H1 (cell line): ENCODE measurements at regions of chr13 and their contacts with region 1.

Region 1: DNA sequence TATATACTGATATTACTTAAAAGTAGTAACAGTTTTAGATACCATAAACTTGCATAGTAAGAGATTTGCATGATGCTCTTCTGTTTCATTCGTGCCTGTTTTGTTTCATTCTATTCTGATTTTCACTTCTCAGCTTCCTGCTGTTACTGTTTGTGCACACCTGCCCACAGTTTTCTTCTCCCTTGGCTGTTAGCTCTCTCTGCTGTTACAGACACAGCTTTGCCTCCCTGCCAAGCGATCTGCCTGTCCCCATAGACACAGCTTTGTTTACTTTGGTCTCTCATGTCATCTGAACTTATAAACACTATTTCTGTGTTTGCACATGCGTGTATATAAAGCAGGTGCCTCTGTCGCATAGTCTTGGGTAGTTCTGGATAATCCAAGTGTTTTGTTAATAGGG is 21.4 kb upstream of the UPF3A start:
- DNase-seq: no peak
- H3K4me3 ChIP-seq: no peak overlapping the region
- H3K27ac ChIP-seq: no peak overlapping the region
- H3K4me1 ChIP-seq: peaks cover 0 to 8% (median 2%) of the 10 kb centered on the region in 4 experiments; a peak in 2 of 7 replicates
- H3K27me3 ChIP-seq: no peaks in the 10 kb centered on the region
- CTCF ChIP-seq: no peak
- EP300 ChIP-seq: no peak
- POLR2A ChIP-seq: no peak
- RAD21 ChIP-seq: no peak

Region 2: DNA sequence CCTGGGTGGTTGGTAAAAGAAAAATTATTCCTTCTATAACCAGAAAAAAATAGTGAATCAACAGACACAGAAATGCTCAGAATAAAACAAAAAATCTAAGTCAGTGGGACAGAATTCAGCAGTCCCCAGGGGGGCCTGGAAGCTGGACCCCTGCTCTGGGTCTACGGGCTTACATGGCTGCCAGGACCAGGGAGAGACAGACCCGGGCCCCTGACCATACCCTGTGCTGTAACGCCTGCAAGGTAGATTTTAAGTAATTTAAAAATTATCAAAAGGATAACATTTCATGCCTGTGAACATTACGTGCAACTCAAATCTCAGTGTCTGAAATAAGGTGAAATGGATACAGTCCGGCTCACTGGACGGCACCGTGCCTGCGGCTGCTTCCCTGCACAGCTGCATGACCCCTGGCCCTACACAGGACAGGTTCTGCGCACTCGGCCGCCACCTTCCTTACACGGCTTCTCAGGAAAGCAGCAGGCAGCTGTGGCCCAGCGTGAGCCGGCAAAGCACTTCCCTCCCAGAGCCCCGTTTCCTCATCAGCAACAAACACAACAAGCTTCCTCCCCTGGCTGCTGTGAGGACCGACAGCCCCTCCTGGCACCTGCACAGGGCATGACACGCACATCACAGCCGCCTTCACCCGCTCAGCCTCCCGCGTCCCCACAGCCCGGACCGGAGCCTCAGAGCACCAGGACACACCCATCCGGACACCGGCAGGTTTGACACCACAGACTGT is 149.7 kb before region 1 on chr13:
- CTCF ChIA-PET with region 1: no interaction called
- POLR2A ChIA-PET with region 1: no interaction called
- DNase-seq: no peak
- H3K4me3 ChIP-seq: no peak overlapping the region
- H3K27ac ChIP-seq: no peak overlapping the region
- H3K4me1 ChIP-seq: peaks cover 4 to 34% (median 27%) of the 10 kb centered on the region in 4 experiments
- H3K27me3 ChIP-seq: no peaks in the 10 kb centered on the region
- CTCF ChIP-seq: peak in 2 of 3 experiments; percentile 35 to 62; a peak in 3 of 4 replicates
- EP300 ChIP-seq: no peak
- POLR2A ChIP-seq: no peak
- RAD21 ChIP-seq: peak; percentile 69 to 71

Region 3: GRCh38 chr13:114234645-114235421 is 25.1 kb before region 1 on chr13 and contains the start of gene CDC16:
- CTCF ChIA-PET with region 1: no interaction called
- POLR2A ChIA-PET with region 1: interaction called, 10 read pairs
- DNase-seq: peak; percentile 80 to 89
- H3K4me3 ChIP-seq: peak within 1 kb of the TSS; percentile 76 to 88 (median 80)
- H3K27ac ChIP-seq: 0 out of 2 replicates have a peak within 1 kb of the TSS, but pooled peaks have one; percentile 11
- H3K4me1 ChIP-seq: peaks cover 8 to 14% (median 9%) of the 10 kb centered on the region in 4 experiments; a peak in 5 of 7 replicates
- H3K27me3 ChIP-seq: no peaks in the 10 kb centered on the region
- CTCF ChIP-seq: peak in 1 of 3 experiments; percentile 2; a peak in 1 of 4 replicates
- EP300 ChIP-seq: peak in 1 of 2 experiments; percentile 48; a peak in 1 of 3 replicates
- POLR2A ChIP-seq: peak; percentile 30 to 60; a peak in 1 of 3 replicates
- RAD21 ChIP-seq: no peak; a peak in 1 of 4 replicates
- total RNA-seq, gene CDC16: 78.7 and 83.4 TPM in 2 replicates

Region 4: DNA sequence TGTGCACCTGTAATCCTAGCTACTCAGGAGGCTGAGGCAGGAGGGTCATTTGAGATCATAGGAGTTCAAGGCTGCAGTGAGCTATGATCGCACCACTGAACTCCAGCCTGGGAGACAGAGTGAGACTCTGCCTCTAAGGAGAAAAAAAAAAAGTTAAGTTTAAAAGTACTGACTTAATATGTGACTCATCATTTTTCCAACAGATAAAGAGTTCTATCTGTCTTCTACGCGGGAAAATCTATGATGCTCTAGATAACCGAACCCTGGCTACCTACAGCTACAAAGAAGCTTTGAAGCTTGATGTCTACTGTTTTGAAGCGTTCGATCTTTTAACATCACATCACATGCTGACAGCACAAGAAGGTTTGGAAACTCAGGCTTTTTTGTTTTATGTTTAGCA is 18.1 kb before region 1 on chr13:
- CTCF ChIA-PET with region 1: no interaction called
- POLR2A ChIA-PET with region 1: interaction called, 11 read pairs
- DNase-seq: no peak
- H3K4me3 ChIP-seq: no peak overlapping the region
- H3K27ac ChIP-seq: no peak overlapping the region
- H3K4me1 ChIP-seq: peaks cover 0 to 1% (median 0%) of the 10 kb centered on the region in 4 experiments; a peak in 2 of 7 replicates
- H3K27me3 ChIP-seq: no peaks in the 10 kb centered on the region
- CTCF ChIP-seq: no peak
- EP300 ChIP-seq: no peak
- POLR2A ChIP-seq: no peak
- RAD21 ChIP-seq: no peak

Region 5: GRCh38 chr13:114248011-114248410 is 12.0 kb before region 1 on chr13:
- CTCF ChIA-PET with region 1: no interaction called
- POLR2A ChIA-PET with region 1: interaction called, 15 read pairs
- DNase-seq: no peak
- H3K4me3 ChIP-seq: no peak overlapping the region
- H3K27ac ChIP-seq: no peak overlapping the region
- H3K4me1 ChIP-seq: no peaks in the 10 kb centered on the region
- H3K27me3 ChIP-seq: no peaks in the 10 kb centered on the region
- CTCF ChIP-seq: no peak
- EP300 ChIP-seq: no peak
- POLR2A ChIP-seq: no peak
- RAD21 ChIP-seq: no peak